WTC11 (cell line): ENCODE measurements at regions of chr20 and their contacts with region 1.

Region 1: DNA sequence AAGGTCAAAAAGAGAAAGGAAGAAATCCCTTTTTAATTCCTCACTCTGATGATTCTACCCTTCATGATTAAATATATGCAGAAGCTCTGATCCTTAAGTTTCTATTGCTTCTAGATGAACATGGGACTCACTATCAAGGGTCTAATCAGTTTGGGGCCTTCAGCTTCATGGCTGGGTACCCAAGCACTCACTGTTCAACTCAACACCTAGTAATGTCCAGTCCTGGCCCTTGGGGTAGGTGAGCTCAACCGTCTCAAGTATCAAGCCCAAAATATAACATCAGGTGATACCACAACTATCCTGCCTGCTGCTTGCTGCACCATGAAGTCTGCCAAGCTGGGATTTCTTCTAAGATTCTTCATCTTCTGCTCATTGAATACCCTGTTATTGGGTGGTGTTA is at the start of gene SPINT4:
- DNase-seq: no peak
- ATAC-seq: no peak
- H3K4me3 Mint-ChIP-seq: no peak within 1 kb of the TSS
- H3K27ac Mint-ChIP-seq: no peak within 1 kb of the TSS
- H3K4me1 Mint-ChIP-seq: 0 out of 2 replicates have a peak, but pooled peaks cover 2% of the 10 kb centered on the region
- H3K27me3 Mint-ChIP-seq: no peaks in the 10 kb centered on the region; the same call in 1 of the 2 replicates
- CTCF ChIP-seq: no peak
- total RNA-seq, gene SPINT4: not detected in 3 replicates

Region 2: GRCh38 chr20:45052698-45053429 is 669.2 kb before region 1 on chr20:
- CTCF ChIA-PET with region 1: no interaction called
- POLR2A ChIA-PET with region 1: interaction called, 14 read pairs
- DNase-seq: no peak
- ATAC-seq: no peak
- H3K4me3 Mint-ChIP-seq: no peak overlapping the region
- H3K27ac Mint-ChIP-seq: peak overlapping the region; percentile 51; the same call in 1 of the 2 replicates
- H3K4me1 Mint-ChIP-seq: peaks cover 30% of the 10 kb centered on the region
- H3K27me3 Mint-ChIP-seq: no peaks in the 10 kb centered on the region
- CTCF ChIP-seq: no peak